IMR-90 (cell line): ENCODE measurements at regions of chr2 and their contacts with region 1.

Region 1: DNA sequence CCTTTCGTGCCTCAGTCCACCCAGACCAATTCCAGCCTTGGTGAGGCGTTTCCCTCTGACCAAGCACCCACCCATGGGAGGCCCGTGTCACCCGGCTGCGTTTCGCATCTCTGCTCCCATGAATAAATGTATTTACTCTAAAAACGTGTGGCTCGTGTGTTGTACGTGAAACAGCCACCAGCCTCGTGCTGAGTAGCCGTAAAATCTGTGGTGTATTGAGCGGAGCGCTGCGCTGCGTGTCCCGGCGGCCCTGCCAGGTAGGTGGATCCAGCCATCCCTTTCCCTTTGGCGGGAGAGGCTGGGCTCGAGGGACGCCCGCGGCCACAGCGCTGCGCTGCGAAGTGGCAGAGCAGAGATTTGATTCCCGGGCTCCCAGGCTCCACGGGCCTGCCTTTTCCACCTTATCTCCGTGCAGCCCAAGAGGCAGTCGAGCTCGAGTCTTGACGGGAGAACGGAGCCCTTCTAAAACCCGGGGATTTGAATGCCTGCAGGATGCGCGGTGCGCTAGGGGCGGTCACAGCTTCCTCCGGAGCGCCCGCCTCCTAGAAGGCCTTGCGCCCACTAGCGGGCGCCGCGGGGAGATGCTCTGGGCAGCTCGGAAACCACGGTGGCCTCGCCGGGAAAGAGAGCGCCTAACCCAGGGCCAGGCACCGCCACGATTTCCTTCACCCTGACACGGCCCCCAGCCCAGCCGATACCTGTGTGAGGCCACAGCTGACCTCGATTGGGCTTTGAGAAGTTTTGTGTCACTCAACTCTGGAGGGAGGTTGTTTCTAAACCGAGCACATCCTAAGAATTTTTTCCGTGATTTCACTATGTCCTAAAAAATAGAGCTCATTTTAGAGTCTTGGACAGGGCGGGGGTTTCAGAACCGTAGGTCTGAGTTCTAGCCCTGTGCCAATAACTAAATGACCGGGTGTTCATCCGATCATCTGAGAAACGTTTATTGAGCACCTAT is 3.9 kb upstream of the PSMD1 start:
- DNase-seq: peak; percentile 77
- ATAC-seq: peak; percentile 83
- H3K4me3 ChIP-seq: peak overlapping the region; percentile 59
- H3K27ac ChIP-seq: no peak overlapping the region; the same call in 1 of the 2 replicates
- H3K4me1 ChIP-seq: no peaks in the 10 kb centered on the region
- H3K27me3 ChIP-seq: peaks cover 24% of the 10 kb centered on the region
- CTCF ChIP-seq: peak; percentile 91
- POLR2A ChIP-seq: no peak
- RAD21 ChIP-seq: peak; percentile 53

Region 2: GRCh38 chr2:229463525-229464346 is 1589.0 kb before region 1 on chr2:
- CTCF ChIA-PET with region 1: no interaction called
- POLR2A ChIA-PET with region 1: no interaction called
- dilution Hi-C with region 1: no loop called
- in situ Hi-C with region 1: no loop called
- intact Hi-C with region 1: no loop called
- DNase-seq: no peak
- ATAC-seq: no peak
- H3K4me3 ChIP-seq: no peak overlapping the region
- H3K27ac ChIP-seq: no peak overlapping the region
- H3K4me1 ChIP-seq: no peaks in the 10 kb centered on the region
- H3K27me3 ChIP-seq: no peaks in the 10 kb centered on the region
- CTCF ChIP-seq: no peak
- POLR2A ChIP-seq: no peak
- RAD21 ChIP-seq: no peak

Region 3: GRCh38 chr2:230902180-230902899 is 150.4 kb before region 1 on chr2:
- CTCF ChIA-PET with region 1: interaction called, 4 read pairs
- POLR2A ChIA-PET with region 1: no interaction called
- dilution Hi-C with region 1: no loop called
- in situ Hi-C with region 1: no loop called
- intact Hi-C with region 1: loop called (anchors 1 kb)
- DNase-seq: peak; percentile 76
- ATAC-seq: peak; percentile 99
- H3K4me3 ChIP-seq: no peak overlapping the region
- H3K27ac ChIP-seq: no peak overlapping the region
- H3K4me1 ChIP-seq: no peaks in the 10 kb centered on the region
- H3K27me3 ChIP-seq: peaks cover 31% of the 10 kb centered on the region
- CTCF ChIP-seq: peak; percentile 95
- POLR2A ChIP-seq: no peak
- RAD21 ChIP-seq: peak; percentile 94

Region 4: GRCh38 chr2:231297108-231297908 is 244.5 kb after region 1 on chr2:
- CTCF ChIA-PET with region 1: no interaction called
- POLR2A ChIA-PET with region 1: no interaction called
- dilution Hi-C with region 1: no loop called
- in situ Hi-C with region 1: no loop called
- intact Hi-C with region 1: no loop called
- DNase-seq: peak; percentile 54
- ATAC-seq: peak; percentile 98
- H3K4me3 ChIP-seq: no peak overlapping the region
- H3K27ac ChIP-seq: no peak overlapping the region
- H3K4me1 ChIP-seq: 0 out of 2 replicates have a peak, but pooled peaks cover 2% of the 10 kb centered on the region
- H3K27me3 ChIP-seq: no peaks in the 10 kb centered on the region
- CTCF ChIP-seq: peak; percentile 66
- POLR2A ChIP-seq: no peak
- RAD21 ChIP-seq: peak; percentile 78